ENCODE measurements at regions of chr9 and their contacts with region 1.

Region 1: DNA sequence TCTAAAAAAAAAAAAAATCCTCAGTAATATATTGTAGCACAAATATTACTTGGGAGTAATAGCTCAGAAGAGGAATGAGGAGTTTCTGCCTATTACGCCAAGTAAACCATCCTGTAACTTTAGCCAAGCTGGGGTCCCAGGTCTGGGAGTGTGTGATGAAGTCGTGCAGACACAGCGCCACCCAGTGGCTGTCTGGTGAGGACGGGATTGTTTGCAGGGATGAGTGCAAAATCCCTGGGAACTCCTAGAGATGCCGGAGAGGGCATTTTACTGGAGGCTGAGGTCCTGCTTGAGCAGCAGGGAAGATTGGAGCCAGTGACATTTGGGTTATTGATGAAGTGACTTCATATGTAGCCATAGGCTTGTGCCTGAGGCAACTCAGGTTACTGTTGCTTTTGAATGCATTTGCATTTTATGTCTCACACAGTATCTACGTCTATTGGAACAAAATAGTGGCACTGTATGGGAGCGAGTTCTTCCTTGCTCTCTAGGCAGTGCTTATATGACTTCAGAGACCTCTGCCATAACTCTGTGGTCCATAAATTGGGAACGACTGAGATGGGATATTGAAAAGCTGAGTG is 72.8 kb downstream of the PSAT1 start:
- DNase-seq: peak; percentile 67
- ATAC-seq: peak; percentile 57
- H3K4me3 Mint-ChIP-seq: no peak overlapping the region
- H3K27ac Mint-ChIP-seq: no peak overlapping the region
- H3K4me1 Mint-ChIP-seq: no peaks in the 10 kb centered on the region
- H3K27me3 Mint-ChIP-seq: peaks cover 9% of the 10 kb centered on the region

Region 2: DNA sequence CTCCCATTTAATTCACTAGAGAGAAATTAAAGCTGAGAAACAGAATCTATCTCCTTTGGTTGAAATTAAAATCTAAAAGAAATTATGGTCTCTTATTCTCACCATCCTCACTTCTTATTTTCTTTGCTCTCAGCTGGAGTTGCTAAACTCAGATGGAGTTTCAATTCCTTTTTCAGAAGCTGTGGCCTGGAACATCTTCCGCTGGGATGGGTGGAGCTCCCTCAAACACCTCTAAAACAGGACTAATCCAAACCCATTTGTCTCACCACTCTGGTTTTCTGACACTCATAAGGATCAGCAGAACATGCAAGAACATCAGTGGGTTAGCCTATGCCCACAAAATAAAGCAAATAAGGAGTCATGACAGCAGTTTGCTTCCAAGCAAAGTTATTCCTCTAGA is 173.5 kb before region 1 on chr9:
- CTCF ChIA-PET with region 1: no interaction called
- POLR2A ChIA-PET with region 1: no interaction called
- DNase-seq: no peak
- ATAC-seq: no peak
- H3K4me3 Mint-ChIP-seq: no peak overlapping the region
- H3K27ac Mint-ChIP-seq: no peak overlapping the region
- H3K4me1 Mint-ChIP-seq: peaks cover 14% of the 10 kb centered on the region
- H3K27me3 Mint-ChIP-seq: no peaks in the 10 kb centered on the region

Region 3: DNA sequence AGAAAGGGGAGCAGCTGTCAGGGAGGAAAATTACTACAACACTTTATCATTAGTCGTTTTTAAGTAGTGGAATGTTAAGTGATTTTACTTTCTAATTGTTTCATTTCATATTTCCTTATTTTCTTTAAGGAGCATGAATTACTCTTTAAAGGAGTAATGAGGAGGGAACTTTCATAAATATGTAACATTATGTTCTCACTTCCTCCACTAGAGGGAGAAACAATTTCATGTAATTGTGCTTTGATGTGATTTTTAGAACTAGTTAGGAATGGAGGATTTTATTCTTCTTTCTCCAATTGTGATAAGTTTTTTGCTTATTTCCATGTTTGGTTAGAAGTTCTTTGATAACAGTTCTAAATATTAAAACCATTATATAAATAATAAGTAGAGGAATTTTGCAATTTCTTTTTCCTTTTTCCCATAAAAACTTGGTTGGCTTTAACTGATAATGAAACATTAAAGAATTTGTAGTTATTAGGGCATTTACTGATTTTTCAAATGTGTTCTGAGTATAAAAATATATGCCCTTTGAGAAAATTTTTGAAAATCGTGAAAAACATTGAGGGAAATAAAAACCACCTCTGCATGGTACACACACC is 108.2 kb before region 1 on chr9:
- CTCF ChIA-PET with region 1: interaction called, 63 read pairs
- POLR2A ChIA-PET with region 1: no interaction called
- DNase-seq: no peak
- ATAC-seq: no peak
- H3K4me3 Mint-ChIP-seq: no peak overlapping the region
- H3K27ac Mint-ChIP-seq: no peak overlapping the region
- H3K4me1 Mint-ChIP-seq: no peaks in the 10 kb centered on the region
- H3K27me3 Mint-ChIP-seq: no peaks in the 10 kb centered on the region

Region 4: GRCh38 chr9:78354324-78354973 is 15.3 kb before region 1 on chr9:
- CTCF ChIA-PET with region 1: interaction called, 18 read pairs
- POLR2A ChIA-PET with region 1: no interaction called
- DNase-seq: no peak
- ATAC-seq: no peak
- H3K4me3 Mint-ChIP-seq: no peak overlapping the region
- H3K27ac Mint-ChIP-seq: no peak overlapping the region
- H3K4me1 Mint-ChIP-seq: peaks cover 20% of the 10 kb centered on the region
- H3K27me3 Mint-ChIP-seq: no peaks in the 10 kb centered on the region

Region 5: DNA sequence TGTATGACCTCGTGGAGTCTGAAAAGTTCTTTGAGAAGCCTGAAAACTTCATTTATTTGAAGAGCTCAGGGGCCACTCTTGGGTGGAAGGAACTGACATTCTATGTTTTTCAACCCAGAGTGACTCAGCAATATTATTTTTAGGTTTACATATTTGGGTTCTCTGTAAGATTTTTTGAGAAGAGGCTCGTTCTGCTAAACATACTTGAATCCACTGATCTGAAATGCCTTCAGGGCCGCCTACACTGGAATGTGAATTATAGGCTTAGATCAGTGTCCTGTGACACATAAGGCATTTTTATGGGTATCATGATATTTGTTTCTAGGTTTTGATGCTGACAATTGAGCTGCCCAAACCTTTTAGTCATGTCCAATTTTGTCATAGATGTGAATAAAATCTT is 13.4 kb after region 1 on chr9:
- CTCF ChIA-PET with region 1: interaction called, 14 read pairs
- POLR2A ChIA-PET with region 1: no interaction called
- DNase-seq: no peak
- ATAC-seq: no peak
- H3K4me3 Mint-ChIP-seq: no peak overlapping the region
- H3K27ac Mint-ChIP-seq: no peak overlapping the region
- H3K4me1 Mint-ChIP-seq: no peaks in the 10 kb centered on the region
- H3K27me3 Mint-ChIP-seq: no peaks in the 10 kb centered on the region

Region 6: GRCh38 chr9:78552802-78553201 is 183.1 kb after region 1 on chr9:
- CTCF ChIA-PET with region 1: no interaction called
- POLR2A ChIA-PET with region 1: no interaction called
- DNase-seq: no peak
- ATAC-seq: no peak
- H3K4me3 Mint-ChIP-seq: no peak overlapping the region
- H3K27ac Mint-ChIP-seq: no peak overlapping the region
- H3K4me1 Mint-ChIP-seq: no peaks in the 10 kb centered on the region
- H3K27me3 Mint-ChIP-seq: no peaks in the 10 kb centered on the region